ENCODE measurements at regions of chr3 and their contacts with region 1.

Region 1: DNA sequence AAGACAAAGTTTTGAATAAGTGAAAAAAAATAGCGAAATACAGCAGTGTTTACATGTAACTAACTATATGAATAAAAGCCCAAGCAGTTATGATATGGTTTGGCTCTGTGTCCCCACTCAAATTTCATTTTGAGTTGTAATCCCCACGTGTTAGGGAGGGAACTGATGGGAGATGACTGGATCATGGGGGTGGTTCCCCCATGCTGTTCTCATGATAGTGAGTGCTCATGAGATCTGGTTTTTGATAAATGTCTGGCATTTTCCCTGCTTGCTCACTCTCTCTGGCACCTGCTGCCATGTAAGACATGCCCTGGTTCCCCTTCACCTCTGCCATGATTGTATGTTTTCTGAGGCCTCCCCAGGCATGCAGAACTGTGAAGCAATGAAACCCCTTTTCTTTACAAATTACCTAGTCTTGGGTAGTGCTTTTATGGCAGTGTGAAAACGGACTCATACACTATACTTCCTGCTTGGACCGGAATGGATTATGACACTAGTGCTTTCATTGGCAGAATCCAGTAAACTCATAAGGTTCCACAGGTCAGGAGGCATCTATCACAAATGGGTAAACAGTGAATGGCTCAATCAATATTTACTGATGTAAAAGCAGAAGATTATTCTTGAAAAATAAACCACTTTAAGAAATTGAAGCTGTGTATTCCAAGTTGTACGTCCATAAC is 192.1 kb downstream of the CBLB start:
- DNase-seq: peak; percentile 48
- H3K4me3 Mint-ChIP-seq: no peak overlapping the region
- H3K27ac Mint-ChIP-seq: peak overlapping the region; percentile 89
- H3K4me1 Mint-ChIP-seq: peaks cover 26% of the 10 kb centered on the region
- H3K27me3 Mint-ChIP-seq: no peaks in the 10 kb centered on the region

Region 2: DNA sequence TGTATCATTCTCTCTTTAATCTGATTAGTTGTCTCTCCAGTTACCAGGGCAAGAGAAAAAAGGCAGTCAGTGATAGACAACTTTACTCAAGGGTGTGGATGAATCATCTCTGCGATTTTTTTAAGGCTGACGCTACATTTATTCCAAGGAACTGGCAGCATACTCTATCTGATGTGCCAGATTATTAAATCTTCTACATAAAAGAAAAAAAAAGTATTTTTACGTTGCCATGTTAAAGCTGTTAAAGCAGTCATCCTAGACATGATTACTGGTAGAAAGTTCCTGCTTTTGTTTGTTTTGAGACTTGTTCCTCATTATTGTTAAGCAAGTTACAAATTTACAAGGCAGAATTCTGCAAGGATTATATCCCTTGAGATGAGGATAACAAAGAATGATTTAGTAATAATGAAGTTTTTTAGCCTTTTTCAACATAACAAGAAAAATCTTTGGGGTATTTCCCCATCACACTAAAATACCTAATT is 70.3 kb after region 1 on chr3:
- intact Hi-C with region 1: loop called (anchors 2 kb)
- DNase-seq: no peak
- H3K4me3 Mint-ChIP-seq: peak overlapping the region; percentile 64
- H3K27ac Mint-ChIP-seq: peak overlapping the region; percentile 82
- H3K4me1 Mint-ChIP-seq: peaks cover 56% of the 10 kb centered on the region
- H3K27me3 Mint-ChIP-seq: no peaks in the 10 kb centered on the region

Region 3: DNA sequence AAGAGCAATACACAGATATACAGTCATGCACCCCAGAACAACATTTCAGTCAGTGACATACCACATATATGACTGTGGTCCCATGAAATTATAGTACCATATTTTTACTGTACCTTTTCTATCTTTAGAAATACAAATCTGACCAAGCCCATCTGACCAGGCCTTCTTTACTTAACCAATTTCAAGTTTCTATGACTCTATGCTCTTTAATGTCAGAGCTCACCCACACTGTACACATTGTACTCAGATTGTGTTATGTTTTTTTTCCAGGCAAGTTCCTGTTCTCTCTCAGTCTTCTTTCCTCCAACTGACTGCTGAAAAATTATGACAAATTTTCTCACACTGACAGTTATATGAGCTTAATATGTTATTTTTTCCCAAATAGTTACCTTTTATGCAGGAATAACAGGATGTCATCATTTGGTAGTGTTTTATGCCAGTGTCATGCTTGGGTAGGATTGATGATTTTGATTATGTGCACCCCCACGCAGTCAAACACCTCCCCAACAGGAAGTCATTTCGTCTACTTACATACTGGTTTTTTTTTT is 200.1 kb after region 1 on chr3:
- intact Hi-C with region 1: loop called (anchors 1 kb)
- DNase-seq: no peak
- H3K4me3 Mint-ChIP-seq: peak overlapping the region; percentile 70
- H3K27ac Mint-ChIP-seq: peak overlapping the region; percentile 84
- H3K4me1 Mint-ChIP-seq: peaks cover 28% of the 10 kb centered on the region
- H3K27me3 Mint-ChIP-seq: no peaks in the 10 kb centered on the region

Region 4: GRCh38 chr3:106119614-106120082 is 442.9 kb after region 1 on chr3:
- intact Hi-C with region 1: loop called (anchors 1 kb)
- DNase-seq: no peak
- H3K4me3 Mint-ChIP-seq: peak overlapping the region; percentile 46
- H3K27ac Mint-ChIP-seq: peak overlapping the region; percentile 87
- H3K4me1 Mint-ChIP-seq: peaks cover 28% of the 10 kb centered on the region
- H3K27me3 Mint-ChIP-seq: no peaks in the 10 kb centered on the region

Region 5: GRCh38 chr3:106206146-106206545 is 529.4 kb after region 1 on chr3:
- intact Hi-C with region 1: loop called (anchors 2 kb)
- DNase-seq: peak; percentile 75
- H3K4me3 Mint-ChIP-seq: peak overlapping the region; percentile 65
- H3K27ac Mint-ChIP-seq: peak overlapping the region; percentile 97
- H3K4me1 Mint-ChIP-seq: peaks cover 39% of the 10 kb centered on the region
- H3K27me3 Mint-ChIP-seq: no peaks in the 10 kb centered on the region

Region 6: DNA sequence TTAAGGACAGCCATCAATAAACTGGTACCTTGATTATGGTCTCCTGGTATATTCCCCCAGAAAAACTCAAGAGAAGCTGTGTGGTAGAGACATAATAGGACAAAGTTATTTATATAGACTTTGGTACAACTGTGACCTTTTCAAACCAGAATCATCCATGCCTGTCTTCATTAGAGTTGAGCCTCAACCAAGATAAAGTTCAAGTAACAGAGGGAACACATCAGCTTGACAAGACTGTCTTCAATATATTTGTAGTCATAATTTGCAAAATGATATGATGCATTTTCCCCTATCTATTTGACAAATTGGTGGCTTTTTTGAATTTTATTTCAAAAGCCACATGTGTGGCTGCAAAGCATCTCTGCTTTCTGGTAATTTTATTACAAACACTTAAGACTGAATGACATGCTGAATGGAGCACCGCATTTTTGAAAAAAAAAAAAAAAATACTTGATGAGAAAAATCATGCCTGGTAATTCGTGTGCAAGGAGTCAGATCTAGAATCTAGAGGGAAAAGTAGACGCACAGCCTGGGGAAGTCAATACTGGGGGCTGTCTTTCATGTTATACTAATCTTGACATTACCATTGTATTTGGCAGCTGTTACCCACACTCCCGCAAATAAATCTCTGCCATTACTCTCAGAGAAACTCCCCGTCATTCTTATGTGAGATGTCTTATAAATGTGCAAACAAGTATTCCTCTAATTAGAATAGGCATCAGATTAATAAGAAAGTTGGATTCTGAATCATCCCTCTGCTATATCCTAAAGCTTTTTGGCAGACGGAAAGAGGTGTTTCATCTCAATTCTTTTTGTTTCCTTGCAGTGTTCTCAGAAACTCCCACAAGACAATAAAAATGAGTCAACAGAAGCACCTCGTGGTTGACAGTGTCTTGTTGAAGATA is 746.8 kb after region 1 on chr3:
- intact Hi-C with region 1: loop called (anchors 1 kb)
- DNase-seq: no peak
- H3K4me3 Mint-ChIP-seq: peak overlapping the region; percentile 13
- H3K27ac Mint-ChIP-seq: peak overlapping the region; percentile 85
- H3K4me1 Mint-ChIP-seq: peaks cover 43% of the 10 kb centered on the region
- H3K27me3 Mint-ChIP-seq: no peaks in the 10 kb centered on the region